ENCODE measurements at regions of chr15 and their contacts with region 1.

Region 1: DNA sequence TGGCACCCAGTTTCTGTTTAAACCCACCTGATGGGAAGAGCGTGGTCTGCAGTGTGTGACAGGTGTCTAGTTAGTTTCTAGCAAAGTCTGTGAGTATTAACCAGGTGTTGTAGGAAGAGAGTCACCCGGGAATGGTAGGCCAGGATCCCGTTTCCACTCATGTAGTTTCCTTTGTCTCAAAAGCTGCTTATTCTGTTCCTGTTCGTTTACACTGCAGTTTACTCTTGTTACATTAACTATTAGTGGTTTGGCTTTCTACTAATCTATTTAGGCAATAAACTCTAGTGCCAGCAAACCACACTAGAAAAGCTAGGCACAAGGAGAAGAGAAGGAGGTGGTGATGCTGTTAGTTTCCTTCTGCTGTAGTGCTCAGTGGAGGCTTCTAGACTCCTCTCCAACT is 32.7 kb downstream of the WDR76 start:
- DNase-seq: no peak
- ATAC-seq: no peak
- H3K4me3 ChIP-seq: no peak overlapping the region
- H3K27ac ChIP-seq: no peak overlapping the region
- H3K4me1 ChIP-seq: no peaks in the 10 kb centered on the region
- H3K27me3 ChIP-seq: no peaks in the 10 kb centered on the region
- CTCF ChIP-seq: no peak

Region 2: GRCh38 chr15:42094512-42094963 is 1765.0 kb before region 1 on chr15 and contains the start of gene PLA2G4D:
- CTCF ChIA-PET with region 1: no interaction called
- POLR2A ChIA-PET with region 1: interaction called, 14 read pairs
- in situ Hi-C with region 1: no loop called
- intact Hi-C with region 1: no loop called
- DNase-seq: no peak
- ATAC-seq: no peak; the same call in 1 of the 2 replicates
- H3K4me3 ChIP-seq: no peak within 1 kb of the TSS
- H3K27ac ChIP-seq: no peak within 1 kb of the TSS
- H3K4me1 ChIP-seq: 0 out of 2 replicates have a peak, but pooled peaks cover 2% of the 10 kb centered on the region
- H3K27me3 ChIP-seq: no peaks in the 10 kb centered on the region; the same call in 1 of the 2 replicates
- CTCF ChIP-seq: no peak
- total RNA-seq, gene PLA2G4D: not detected

Region 3: GRCh38 chr15:44366971-44367370 is 507.4 kb after region 1 on chr15:
- CTCF ChIA-PET with region 1: interaction called, 10 read pairs
- POLR2A ChIA-PET with region 1: no interaction called
- in situ Hi-C with region 1: no loop called
- intact Hi-C with region 1: no loop called
- DNase-seq: no peak
- ATAC-seq: no peak
- H3K4me3 ChIP-seq: no peak overlapping the region
- H3K27ac ChIP-seq: no peak overlapping the region
- H3K4me1 ChIP-seq: no peaks in the 10 kb centered on the region
- H3K27me3 ChIP-seq: no peaks in the 10 kb centered on the region
- CTCF ChIP-seq: no peak